ENCODE measurements at regions of chr1 and their contacts with region 1.

Region 1: GRCh38 chr1:156096640-156097391 is 14.6 kb upstream of the MEX3A start:
- DNase-seq: peak; percentile 92 to 95
- H3K4me3 ChIP-seq: no peak overlapping the region
- H3K27ac ChIP-seq: peak overlapping the region in 4 of 5 donors; percentile 70 to 80 (median 74)
- H3K4me1 ChIP-seq: peaks cover 10 to 41% (median 22%) of the 10 kb centered on the region in 4 donors
- H3K27me3 ChIP-seq: no peaks in the 10 kb centered on the region
- CTCF ChIP-seq: peak in 6 of 7 experiments; percentile 77 to 96 (median 91)
- EP300 ChIP-seq: no peak
- POLR2A ChIP-seq: no peak

Region 2: DNA sequence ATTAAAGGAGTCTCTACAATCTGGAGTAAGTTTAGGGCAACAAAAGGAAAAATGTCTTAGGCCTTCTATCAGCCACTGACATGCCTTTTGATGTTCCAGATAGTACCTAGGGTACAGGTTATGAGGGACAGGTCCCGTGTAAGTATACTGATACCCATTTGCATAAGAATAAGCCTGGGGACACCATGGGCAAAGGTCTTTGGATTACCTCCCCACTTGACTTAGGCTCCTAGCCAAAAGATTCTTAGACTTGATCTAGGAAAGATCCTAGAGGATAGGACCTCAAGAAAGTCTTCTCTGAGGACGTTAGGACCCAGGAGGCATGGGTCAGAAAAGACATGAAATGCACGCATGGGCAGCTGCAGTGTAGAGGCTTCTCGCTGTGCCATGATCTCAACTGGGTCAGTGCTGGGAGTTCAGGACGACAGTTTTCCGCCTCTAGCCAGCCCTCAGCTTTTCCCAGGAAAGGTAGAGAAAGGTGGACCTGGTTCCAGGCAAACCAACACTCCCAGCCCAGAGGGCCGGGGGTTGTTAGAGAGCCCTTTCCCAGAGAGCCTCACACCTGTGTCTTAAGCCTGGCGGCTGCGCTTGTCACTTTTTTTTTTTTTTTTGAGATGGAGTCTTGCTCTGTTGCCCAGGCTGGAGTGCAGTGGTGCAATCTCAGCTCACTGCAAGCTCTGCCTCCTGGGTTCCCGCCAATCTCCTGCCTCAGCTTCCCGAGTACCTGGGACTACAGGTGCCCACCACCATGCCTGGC is 460.2 kb before region 1 on chr1:
- intact Hi-C with region 1: no loop called
- DNase-seq: no peak
- H3K4me3 ChIP-seq: peak overlapping the region in 1 of 4 donors; percentile 46
- H3K27ac ChIP-seq: no peak overlapping the region
- H3K4me1 ChIP-seq: peaks cover 0 to 9% (median 5%) of the 10 kb centered on the region in 4 donors
- H3K27me3 ChIP-seq: no peaks in the 10 kb centered on the region
- CTCF ChIP-seq: no peak
- EP300 ChIP-seq: no peak
- POLR2A ChIP-seq: no peak

Region 3: DNA sequence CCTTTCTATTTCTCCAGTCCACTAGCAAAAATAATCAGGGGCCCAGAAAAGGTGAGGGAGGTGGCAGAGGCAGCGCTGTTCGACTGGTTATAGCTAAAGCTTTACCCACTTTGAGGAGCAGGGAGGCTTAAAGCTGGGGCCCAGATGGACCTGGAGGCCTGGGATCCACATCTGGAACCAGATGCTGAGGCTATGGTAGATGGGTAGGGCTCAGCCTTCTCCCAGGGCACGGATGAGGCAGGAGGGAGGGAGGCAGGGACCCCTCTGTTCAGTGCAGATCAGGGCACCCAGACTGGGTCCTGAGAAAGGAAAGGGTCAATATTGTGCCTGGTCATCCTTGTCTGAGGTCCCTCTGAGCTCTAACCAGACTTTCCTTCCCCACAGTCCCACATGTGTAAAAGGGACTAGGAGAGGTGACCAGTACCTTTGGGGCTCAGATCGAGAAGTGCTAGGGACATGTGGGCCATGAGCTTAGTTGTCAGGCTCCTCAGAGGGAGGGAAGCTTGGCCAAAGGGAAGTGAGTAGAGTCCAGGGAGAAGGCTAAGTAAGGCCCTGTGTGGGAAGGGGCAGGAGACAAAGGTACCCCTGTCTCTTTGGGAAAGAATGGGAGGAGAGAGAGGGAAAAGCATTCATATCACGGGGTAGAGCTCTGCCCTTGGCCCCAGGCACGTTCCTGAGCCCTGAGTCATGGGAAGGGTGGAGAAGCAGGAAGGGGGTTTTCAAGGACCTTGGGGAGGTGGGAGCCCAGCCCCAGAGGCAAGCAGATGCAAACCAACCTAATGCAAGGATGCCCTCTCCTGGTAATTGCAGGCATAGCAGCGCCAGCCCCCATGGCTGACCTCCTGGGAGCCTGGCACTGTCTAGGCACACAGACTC is 33.1 kb after region 1 on chr1:
- intact Hi-C with region 1: loop called (anchors 5 kb)
- DNase-seq: peak; percentile 86 to 97
- H3K4me3 ChIP-seq: peak overlapping the region in 2 of 4 donors; percentile 7
- H3K27ac ChIP-seq: peak overlapping the region; percentile 62 to 99 (median 93)
- H3K4me1 ChIP-seq: peaks cover 58 to 74% (median 60%) of the 10 kb centered on the region in 4 donors
- H3K27me3 ChIP-seq: no peaks in the 10 kb centered on the region
- CTCF ChIP-seq: peak in 6 of 7 experiments; percentile 65 to 99 (median 98)
- EP300 ChIP-seq: no peak
- POLR2A ChIP-seq: no peak

Region 4: DNA sequence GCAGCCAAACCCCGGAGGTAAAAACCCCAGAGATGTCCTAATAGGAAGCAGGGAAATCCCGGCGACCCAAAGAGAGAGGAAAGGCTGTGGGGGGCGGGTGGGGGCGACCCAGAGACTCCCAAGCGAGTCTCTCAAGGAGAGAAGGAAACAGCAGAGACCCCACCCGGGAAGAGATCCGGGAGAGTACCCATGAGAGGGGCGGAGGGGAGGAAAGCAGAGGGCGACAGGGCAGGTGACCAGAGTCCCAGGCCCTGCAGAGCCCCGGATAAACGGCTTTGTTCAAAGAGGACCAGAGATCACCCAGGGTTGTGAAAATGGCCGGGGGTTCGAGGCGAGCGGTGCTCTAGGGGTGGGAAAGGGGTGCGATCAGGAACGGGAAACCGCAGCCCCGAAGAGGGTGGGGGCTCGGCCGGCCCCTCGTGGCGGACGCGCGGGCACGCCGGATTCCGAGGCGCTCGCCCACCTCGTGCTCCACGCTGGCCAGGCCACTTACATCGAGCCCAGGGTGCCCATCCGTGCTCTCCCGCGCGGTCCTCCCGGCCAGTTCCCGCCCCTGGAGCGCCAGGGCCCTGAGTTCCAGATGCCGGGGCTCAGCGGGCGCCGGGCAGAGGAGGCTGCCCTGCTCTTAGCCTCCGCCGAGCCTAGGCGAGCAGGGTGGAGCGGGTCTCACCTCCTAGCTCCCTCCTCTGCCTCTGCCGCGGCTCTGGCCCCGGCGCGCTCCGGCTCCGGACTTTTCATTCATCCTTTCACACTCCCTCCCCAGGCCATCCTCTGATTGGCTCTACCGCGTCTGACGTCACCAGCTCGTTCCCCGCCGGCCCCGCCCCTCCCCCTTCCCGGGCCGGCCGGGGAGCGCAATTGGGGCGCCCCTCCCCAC is 324.5 kb after region 1 on chr1:
- intact Hi-C with region 1: no loop called
- DNase-seq: peak; percentile 74 to 90
- H3K4me3 ChIP-seq: peak overlapping the region; percentile 34 to 54 (median 36)
- H3K27ac ChIP-seq: no peak overlapping the region
- H3K4me1 ChIP-seq: peaks cover 25 to 32% (median 28%) of the 10 kb centered on the region in 4 donors
- H3K27me3 ChIP-seq: peaks cover 12 to 100% (median 76%) of the 10 kb centered on the region in 3 donors
- CTCF ChIP-seq: no peak
- EP300 ChIP-seq: no peak
- POLR2A ChIP-seq: no peak

Measured in stomach (tissue), 19 donors.